ENCODE measurements at regions of chr11 and their contacts with region 1.

Region 1: DNA sequence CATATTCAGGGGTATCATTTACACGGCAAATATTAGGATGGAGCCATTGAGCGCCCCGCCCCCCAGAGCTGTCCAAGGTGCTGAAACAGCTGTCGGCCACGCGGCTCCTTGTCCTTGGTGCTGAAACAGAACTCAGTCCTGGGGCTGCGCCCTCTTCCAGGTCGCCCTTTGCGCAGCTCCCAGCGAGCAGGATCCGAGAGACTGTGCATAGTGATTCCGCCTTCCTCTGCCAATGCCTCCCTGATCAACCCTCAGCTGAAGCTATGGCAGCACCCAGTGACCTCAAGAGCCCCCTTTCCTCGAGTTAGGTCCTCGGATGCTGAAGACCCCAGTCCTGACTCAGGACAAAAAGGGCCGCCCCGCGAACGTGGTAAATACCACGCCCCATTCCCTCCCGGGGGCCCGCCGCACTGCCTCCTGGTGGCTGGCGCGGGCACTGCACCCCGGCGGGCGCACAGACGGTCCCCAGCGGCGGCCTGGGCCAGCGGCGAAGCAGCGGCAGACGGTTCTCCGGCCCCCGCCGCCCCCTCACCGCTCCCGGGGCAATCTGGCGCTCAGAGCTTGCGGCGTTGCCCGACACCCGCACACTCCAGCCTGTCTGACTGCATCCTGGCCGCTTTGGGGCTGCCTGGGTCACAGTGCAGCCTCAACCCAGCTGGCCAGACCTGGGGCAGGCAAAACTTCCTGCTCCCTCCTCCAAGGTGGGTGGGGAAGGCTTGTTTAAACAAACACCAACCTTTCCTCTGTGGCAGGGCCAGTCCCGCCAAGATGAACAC is 13.4 kb downstream of the SYT7 start:
- DNase-seq: no peak
- H3K4me3 ChIP-seq: no peak overlapping the region
- CTCF ChIP-seq: peak; percentile 26

Region 2: GRCh38 chr11:61384271-61385242 is 182.9 kb before region 1 on chr11:
- CTCF ChIA-PET with region 1: no interaction called
- POLR2A ChIA-PET with region 1: no interaction called
- DNase-seq: no peak
- H3K4me3 ChIP-seq: no peak overlapping the region
- CTCF ChIP-seq: peak; percentile 32

Region 3: GRCh38 chr11:61555978-61556377 is 11.5 kb before region 1 on chr11:
- CTCF ChIA-PET with region 1: interaction called, 14 read pairs
- POLR2A ChIA-PET with region 1: no interaction called
- DNase-seq: no peak
- H3K4me3 ChIP-seq: no peak overlapping the region
- CTCF ChIP-seq: no peak

Measured in AG04449 (cell line).